ENCODE measurements at regions of chr11 and their contacts with region 1.

Region 1: DNA sequence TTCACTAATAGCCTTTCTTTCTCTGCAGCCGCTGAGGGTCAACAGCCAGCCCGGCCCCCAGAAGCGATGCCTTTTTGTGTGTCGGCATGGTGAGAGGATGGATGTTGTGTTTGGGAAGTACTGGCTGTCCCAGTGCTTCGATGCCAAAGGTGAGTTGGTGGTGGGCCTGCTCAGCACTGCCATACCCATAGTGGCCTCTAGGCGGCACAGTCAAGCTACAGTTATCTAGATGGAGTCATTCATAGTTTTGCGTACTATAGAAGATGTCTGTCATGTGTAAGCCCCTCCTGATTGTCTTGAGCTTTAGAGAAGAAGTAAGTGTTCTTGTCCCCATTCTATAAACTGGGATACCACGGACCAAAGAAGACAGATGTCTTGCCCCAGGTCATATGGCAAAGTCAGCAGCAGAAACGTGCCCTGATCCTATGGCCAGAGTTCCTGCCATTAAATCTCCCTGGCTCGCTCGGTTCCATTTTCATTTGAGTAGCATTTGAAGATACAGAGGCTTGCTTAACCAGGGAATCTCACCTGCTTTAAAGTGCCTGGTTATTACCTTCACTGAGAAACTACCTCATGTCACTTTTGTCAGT is 42.1 kb upstream of the CRTAM start:
- DNase-seq: peak; percentile 68
- CTCF ChIP-seq: peak; percentile 86

Region 2: GRCh38 chr11:122781378-122782195 is 14.6 kb before region 1 on chr11:
- CTCF ChIA-PET with region 1: interaction called, 46 read pairs
- POLR2A ChIA-PET with region 1: no interaction called
- DNase-seq: peak; percentile 82
- CTCF ChIP-seq: peak; percentile 86

Region 3: DNA sequence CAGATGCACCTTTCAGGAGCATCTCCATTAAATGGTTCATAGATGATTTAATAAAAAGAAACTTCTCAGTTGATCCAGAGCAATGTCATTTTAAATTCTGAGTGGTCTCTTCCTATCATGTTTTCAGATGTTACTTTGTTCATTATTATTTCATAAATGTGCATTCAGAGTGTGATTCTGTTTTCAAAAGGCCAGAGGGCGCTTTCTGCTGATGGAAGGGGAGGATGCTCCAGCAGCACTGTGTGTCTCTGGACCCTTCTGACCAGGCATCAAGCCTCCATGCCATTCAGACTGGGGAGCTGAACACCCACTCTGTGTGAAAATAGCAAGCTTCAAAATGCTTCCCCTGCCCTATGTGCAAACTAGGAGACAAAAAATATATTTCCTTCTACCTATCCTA is 18.2 kb after region 1 on chr11:
- CTCF ChIA-PET with region 1: interaction called, 70 read pairs
- POLR2A ChIA-PET with region 1: no interaction called
- DNase-seq: no peak
- CTCF ChIP-seq: peak; percentile 34

Region 4: GRCh38 chr11:122832721-122833470 is 36.7 kb after region 1 on chr11:
- CTCF ChIA-PET with region 1: interaction called, 28 read pairs
- POLR2A ChIA-PET with region 1: no interaction called
- DNase-seq: no peak
- CTCF ChIP-seq: no peak

Region 5: DNA sequence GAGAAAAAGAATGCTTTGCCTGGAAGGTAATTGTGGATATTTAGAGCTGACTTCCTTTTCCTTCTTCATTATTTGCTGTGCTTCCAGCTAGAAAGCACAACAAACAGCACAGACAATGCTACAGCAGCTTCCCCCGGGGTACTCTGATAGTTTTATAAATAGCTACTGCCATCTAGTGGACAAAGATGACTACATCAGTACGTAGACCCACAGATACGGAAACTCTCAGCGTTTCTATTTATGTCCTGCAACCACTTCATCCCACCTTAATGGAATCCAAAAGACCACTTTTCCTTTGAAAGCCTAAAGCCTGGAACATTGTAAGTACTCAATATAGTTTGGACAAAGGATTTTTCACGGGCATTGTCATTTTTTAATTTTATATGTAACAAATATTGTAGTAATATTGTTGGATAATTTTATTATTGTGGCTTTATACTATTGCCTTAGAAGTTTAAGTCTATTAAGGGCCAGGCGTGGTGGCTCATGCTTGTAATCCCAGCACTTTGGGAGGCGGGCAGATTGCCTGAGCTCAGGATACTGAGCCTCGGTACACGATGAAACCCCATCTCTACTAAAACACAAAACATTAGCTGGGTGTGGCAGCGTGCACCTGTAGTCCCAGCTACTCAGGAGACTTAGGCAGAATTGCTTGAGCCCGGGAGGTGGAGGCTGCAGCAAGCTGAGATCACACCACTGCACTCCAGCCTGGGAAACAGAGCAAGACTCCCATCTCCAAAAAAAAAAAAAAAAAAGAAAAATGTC is 258.3 kb after region 1 on chr11:
- CTCF ChIA-PET with region 1: interaction called, 19 read pairs
- POLR2A ChIA-PET with region 1: no interaction called
- DNase-seq: peak; percentile 76
- CTCF ChIP-seq: peak; percentile 65